ENCODE measurements at regions of chr11 and their contacts with region 1.

Region 1: GRCh38 chr11:46410021-46410420 is 18.4 kb upstream of the CHRM4 start:
- DNase-seq: no peak
- ATAC-seq: no peak

Region 2: DNA sequence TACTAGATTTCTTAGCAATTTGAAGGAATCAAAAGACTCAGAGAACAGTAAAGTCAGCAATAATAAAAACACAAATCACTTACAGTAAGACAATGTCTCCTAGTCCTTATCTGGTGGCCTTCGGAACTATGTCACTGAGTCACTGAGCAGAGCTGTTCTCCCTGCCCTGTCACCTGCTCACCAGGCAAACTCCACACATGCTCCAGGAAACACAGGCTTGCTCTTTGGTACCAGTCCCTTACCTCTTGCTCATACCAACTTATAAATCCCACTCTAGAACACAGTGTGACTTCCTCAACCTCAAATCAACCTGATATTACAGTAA is 62.6 kb after region 1 on chr11:
- intact Hi-C with region 1: loop called (anchors 10 kb)
- DNase-seq: no peak
- ATAC-seq: peak; percentile 80